Motor neuron (in vitro differentiated cells): ENCODE measurements at regions of chr17 and their contacts with region 1.

Region 1: GRCh38 chr17:9959377-9959981 is 54.4 kb upstream of the RCVRN start:
- ATAC-seq: peak; percentile 56 to 91 (median 82)
- H3K4me3 ChIP-seq: peak overlapping the region in 3 of 5 donors; percentile 4 to 10 (median 4)
- H3K27ac ChIP-seq: no peak overlapping the region
- H3K4me1 ChIP-seq: peaks cover 8 to 11% of the 10 kb centered on the region in 2 donors

Region 2: GRCh38 chr17:10198509-10199253 is 239.2 kb after region 1 on chr17 and contains the start of gene GAS7:
- in situ Hi-C with region 1: loop called in 1 of 9 experiments (anchors 25 kb)
- ATAC-seq: peak; percentile 77 to 89 (median 83)
- H3K4me3 ChIP-seq: peak within 1 kb of the TSS; percentile 54 to 85 (median 61)
- H3K27ac ChIP-seq: no peak within 1 kb of the TSS
- H3K4me1 ChIP-seq: no peaks in the 10 kb centered on the region
- total RNA-seq, gene GAS7: 4.1 to 37.7 (median 9.7) TPM

Region 3: GRCh38 chr17:10226930-10227685 is 267.6 kb after region 1 on chr17:
- in situ Hi-C with region 1: loop called in 2 of 9 experiments (anchors 10 to 25 kb)
- ATAC-seq: peak; percentile 34 to 93 (median 64)
- H3K4me3 ChIP-seq: no peak overlapping the region
- H3K27ac ChIP-seq: no peak overlapping the region
- H3K4me1 ChIP-seq: no peaks in the 10 kb centered on the region